GM12878 (cell line): ENCODE measurements at regions of chr10 and their contacts with region 1.

Region 1: GRCh38 chr10:77641788-77642397 is 4.3 kb upstream of the KCNMA1 start:
- DNase-seq: no peak
- ATAC-seq: peak; percentile 27
- H3K4me3 ChIP-seq: no peak overlapping the region
- H3K27ac ChIP-seq: no peak overlapping the region
- H3K4me1 ChIP-seq: 0 out of 2 replicates have a peak, but pooled peaks cover 2% of the 10 kb centered on the region
- H3K27me3 ChIP-seq: no peaks in the 10 kb centered on the region; a peak in 1 of 4 replicates
- CTCF ChIP-seq: peak; percentile 58 to 81 (median 72); a peak in 5 of 6 replicates
- EP300 ChIP-seq: no peak
- POLR2A ChIP-seq: no peak
- RAD21 ChIP-seq: peak; percentile 92

Region 2: GRCh38 chr10:77173615-77174461 is 468.1 kb before region 1 on chr10:
- CTCF ChIA-PET with region 1: interaction called, 532 read pairs
- POLR2A ChIA-PET with region 1: no interaction called
- RAD21 ChIA-PET with region 1: interaction called, 54 read pairs
- SMC1A ChIA-PET with region 1: interaction called, 113 read pairs
- in situ Hi-C with region 1: loop called (anchors 5 kb)
- intact Hi-C with region 1: loop called (anchors 1 kb)
- DNase-seq: peak; percentile 28
- ATAC-seq: peak; percentile 84
- H3K4me3 ChIP-seq: no peak overlapping the region
- H3K27ac ChIP-seq: no peak overlapping the region
- H3K4me1 ChIP-seq: no peaks in the 10 kb centered on the region
- H3K27me3 ChIP-seq: no peaks in the 10 kb centered on the region
- CTCF ChIP-seq: peak; percentile 80 to 96 (median 81); a peak in 5 of 6 replicates
- EP300 ChIP-seq: no peak
- POLR2A ChIP-seq: no peak
- RAD21 ChIP-seq: peak; percentile 96

Region 3: DNA sequence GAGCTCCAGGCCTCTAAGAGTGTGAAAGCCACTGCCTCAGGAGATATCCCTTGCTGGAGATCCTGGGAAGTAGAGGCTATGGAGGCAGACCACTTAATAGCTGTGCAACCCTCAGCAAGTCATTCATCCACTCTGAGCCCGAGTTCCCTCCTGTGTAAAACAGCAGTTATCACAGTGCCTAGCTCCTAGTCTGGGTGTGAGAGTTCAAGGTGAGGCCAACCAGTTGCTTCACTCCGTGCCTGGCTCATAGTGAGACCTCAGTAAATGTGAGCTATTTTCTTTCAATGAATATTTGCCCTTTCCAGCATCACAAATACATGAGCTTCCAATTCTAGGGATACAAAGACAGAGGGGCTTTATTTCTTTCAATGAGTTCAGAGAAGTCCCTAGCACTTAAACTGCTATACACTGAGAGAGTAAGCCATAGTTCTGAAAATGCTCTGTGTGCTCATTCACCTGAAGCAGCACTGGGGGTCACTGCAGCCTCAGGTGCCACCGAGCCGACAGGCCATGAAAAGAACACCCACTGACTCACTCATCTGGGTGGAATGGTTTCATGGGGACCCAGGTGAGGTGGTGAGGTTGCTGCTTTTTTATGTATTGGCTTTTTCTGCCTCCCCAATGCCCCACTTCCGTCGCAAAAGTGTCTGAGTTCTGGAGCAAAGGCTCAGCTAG is 264.1 kb before region 1 on chr10:
- CTCF ChIA-PET with region 1: interaction called, 23 read pairs
- POLR2A ChIA-PET with region 1: no interaction called
- RAD21 ChIA-PET with region 1: interaction called, 15 read pairs
- SMC1A ChIA-PET with region 1: interaction called, 8 read pairs
- in situ Hi-C with region 1: no loop called
- intact Hi-C with region 1: no loop called
- DNase-seq: no peak
- ATAC-seq: peak; percentile 55
- H3K4me3 ChIP-seq: no peak overlapping the region
- H3K27ac ChIP-seq: no peak overlapping the region
- H3K4me1 ChIP-seq: no peaks in the 10 kb centered on the region
- H3K27me3 ChIP-seq: no peaks in the 10 kb centered on the region
- CTCF ChIP-seq: peak in 1 of 3 experiments; percentile 29; a peak in 1 of 6 replicates
- EP300 ChIP-seq: no peak
- POLR2A ChIP-seq: no peak
- RAD21 ChIP-seq: peak; percentile 38; the same call in 1 of the 2 replicates

Region 4: DNA sequence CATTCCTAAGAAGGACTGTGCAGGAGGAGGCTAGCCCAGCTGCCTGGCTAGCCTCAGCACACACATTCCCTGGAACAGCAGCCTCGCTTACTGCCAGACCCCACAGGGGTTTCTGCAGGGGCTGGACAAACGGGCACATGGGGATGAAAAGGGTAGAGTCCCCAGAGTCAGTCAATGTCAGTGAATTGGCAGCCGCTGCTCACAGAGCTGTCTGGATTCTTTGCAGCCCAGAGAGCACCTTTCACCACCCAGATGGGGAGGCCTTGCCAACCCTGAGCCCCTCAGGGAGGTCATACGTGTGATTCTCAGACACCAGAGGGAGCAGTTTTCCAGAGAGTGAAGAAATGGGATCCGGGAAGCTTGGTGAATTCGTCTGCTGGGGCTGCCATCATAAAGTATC is 147.6 kb before region 1 on chr10:
- CTCF ChIA-PET with region 1: interaction called, 14 read pairs
- POLR2A ChIA-PET with region 1: no interaction called
- RAD21 ChIA-PET with region 1: interaction called, 33 read pairs
- SMC1A ChIA-PET with region 1: interaction called, 17 read pairs
- in situ Hi-C with region 1: no loop called
- intact Hi-C with region 1: loop called (anchors 5 kb)
- DNase-seq: no peak
- ATAC-seq: peak; percentile 13
- H3K4me3 ChIP-seq: no peak overlapping the region
- H3K27ac ChIP-seq: no peak overlapping the region
- H3K4me1 ChIP-seq: peaks cover 14% of the 10 kb centered on the region
- H3K27me3 ChIP-seq: no peaks in the 10 kb centered on the region
- CTCF ChIP-seq: 0 out of 6 replicates have a peak, but pooled peaks of 1 of the 3 experiments have one; percentile 4
- EP300 ChIP-seq: no peak
- POLR2A ChIP-seq: no peak
- RAD21 ChIP-seq: no peak

Region 5: GRCh38 chr10:77564731-77565589 is 76.9 kb before region 1 on chr10:
- CTCF ChIA-PET with region 1: interaction called, 12 read pairs
- POLR2A ChIA-PET with region 1: no interaction called
- RAD21 ChIA-PET with region 1: interaction called, 4 read pairs
- SMC1A ChIA-PET with region 1: interaction called, 6 read pairs
- in situ Hi-C with region 1: no loop called
- intact Hi-C with region 1: no loop called
- DNase-seq: no peak
- ATAC-seq: peak; percentile 13; the same call in 2 of the 3 replicates
- H3K4me3 ChIP-seq: no peak overlapping the region
- H3K27ac ChIP-seq: no peak overlapping the region
- H3K4me1 ChIP-seq: no peaks in the 10 kb centered on the region
- H3K27me3 ChIP-seq: no peaks in the 10 kb centered on the region
- CTCF ChIP-seq: no peak
- EP300 ChIP-seq: no peak
- POLR2A ChIP-seq: no peak
- RAD21 ChIP-seq: no peak

Region 6: DNA sequence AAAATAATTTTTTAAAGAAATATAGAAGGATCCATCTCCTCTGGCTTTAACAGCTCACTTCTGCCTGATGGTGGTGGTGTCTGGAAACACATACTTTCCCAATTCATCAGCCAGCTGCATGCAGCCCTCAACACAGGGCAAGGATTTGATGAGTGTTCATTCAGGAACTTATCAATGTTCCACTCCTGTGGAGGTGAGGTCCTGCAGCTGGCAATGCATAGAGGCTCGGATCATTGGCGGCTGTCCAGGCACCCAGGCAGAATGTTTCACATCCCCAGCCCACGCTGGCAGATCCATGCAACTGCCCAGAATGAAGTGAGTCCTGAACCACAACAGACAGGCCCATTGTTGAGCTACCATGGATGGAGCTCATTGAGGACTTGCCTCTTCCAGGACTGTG is 50.9 kb after region 1 on chr10:
- CTCF ChIA-PET with region 1: interaction called, 25 read pairs
- POLR2A ChIA-PET with region 1: interaction called, 4 read pairs
- RAD21 ChIA-PET with region 1: interaction called, 4 read pairs
- SMC1A ChIA-PET with region 1: interaction called, 25 read pairs
- in situ Hi-C with region 1: no loop called
- intact Hi-C with region 1: no loop called
- DNase-seq: no peak
- ATAC-seq: no peak
- H3K4me3 ChIP-seq: no peak overlapping the region
- H3K27ac ChIP-seq: no peak overlapping the region
- H3K4me1 ChIP-seq: no peaks in the 10 kb centered on the region
- H3K27me3 ChIP-seq: no peaks in the 10 kb centered on the region
- CTCF ChIP-seq: no peak
- EP300 ChIP-seq: no peak
- POLR2A ChIP-seq: no peak
- RAD21 ChIP-seq: no peak

Region 7: GRCh38 chr10:77784856-77785255 is 143.0 kb after region 1 on chr10:
- CTCF ChIA-PET with region 1: no interaction called
- POLR2A ChIA-PET with region 1: no interaction called
- RAD21 ChIA-PET with region 1: no interaction called
- SMC1A ChIA-PET with region 1: no interaction called
- in situ Hi-C with region 1: no loop called
- intact Hi-C with region 1: no loop called
- DNase-seq: no peak
- ATAC-seq: no peak
- H3K4me3 ChIP-seq: no peak overlapping the region
- H3K27ac ChIP-seq: no peak overlapping the region
- H3K4me1 ChIP-seq: no peaks in the 10 kb centered on the region
- H3K27me3 ChIP-seq: no peaks in the 10 kb centered on the region
- CTCF ChIP-seq: no peak
- EP300 ChIP-seq: no peak
- POLR2A ChIP-seq: no peak
- RAD21 ChIP-seq: no peak

Region 8: DNA sequence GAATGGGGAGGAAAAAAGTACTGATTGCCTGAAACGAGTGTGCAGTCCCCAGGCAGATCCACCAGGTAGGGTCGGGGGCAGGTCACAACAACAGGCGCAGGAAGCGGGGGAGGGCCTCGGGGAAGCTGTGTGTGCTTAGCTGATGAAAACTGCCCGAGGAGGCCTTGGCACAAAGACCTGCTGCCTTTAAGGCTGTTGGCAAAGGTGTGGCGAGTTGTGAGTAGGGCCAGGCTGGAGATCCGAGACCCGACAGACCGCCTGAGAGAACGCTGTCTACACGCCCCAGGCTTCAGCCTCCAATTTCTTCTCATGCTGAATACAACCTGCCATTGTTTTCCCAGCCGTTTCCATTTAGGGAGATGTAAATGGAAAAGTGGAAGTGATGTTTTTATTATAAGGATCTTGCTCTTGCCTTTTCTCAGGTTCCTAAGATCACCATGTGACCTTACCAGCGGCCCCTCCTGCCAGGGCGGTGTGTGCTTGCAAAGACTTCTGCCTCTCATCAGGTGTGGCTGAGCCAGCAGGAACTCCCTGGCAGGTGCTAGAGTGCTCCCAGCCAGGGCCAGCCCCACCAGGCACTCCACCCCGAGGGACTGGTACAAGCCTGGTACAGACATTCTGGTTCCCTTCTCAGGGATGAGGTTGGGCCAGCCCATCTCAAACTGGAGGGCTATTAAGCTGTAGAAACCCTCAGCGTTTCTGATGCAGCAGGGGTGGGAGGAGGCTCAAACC is 223.9 kb after region 1 on chr10:
- CTCF ChIA-PET with region 1: no interaction called
- POLR2A ChIA-PET with region 1: no interaction called
- RAD21 ChIA-PET with region 1: no interaction called
- SMC1A ChIA-PET with region 1: no interaction called
- in situ Hi-C with region 1: no loop called
- intact Hi-C with region 1: no loop called
- DNase-seq: no peak
- ATAC-seq: no peak
- H3K4me3 ChIP-seq: no peak overlapping the region
- H3K27ac ChIP-seq: no peak overlapping the region
- H3K4me1 ChIP-seq: no peaks in the 10 kb centered on the region
- H3K27me3 ChIP-seq: no peaks in the 10 kb centered on the region
- CTCF ChIP-seq: no peak
- EP300 ChIP-seq: no peak
- POLR2A ChIP-seq: no peak
- RAD21 ChIP-seq: no peak

Region 9: DNA sequence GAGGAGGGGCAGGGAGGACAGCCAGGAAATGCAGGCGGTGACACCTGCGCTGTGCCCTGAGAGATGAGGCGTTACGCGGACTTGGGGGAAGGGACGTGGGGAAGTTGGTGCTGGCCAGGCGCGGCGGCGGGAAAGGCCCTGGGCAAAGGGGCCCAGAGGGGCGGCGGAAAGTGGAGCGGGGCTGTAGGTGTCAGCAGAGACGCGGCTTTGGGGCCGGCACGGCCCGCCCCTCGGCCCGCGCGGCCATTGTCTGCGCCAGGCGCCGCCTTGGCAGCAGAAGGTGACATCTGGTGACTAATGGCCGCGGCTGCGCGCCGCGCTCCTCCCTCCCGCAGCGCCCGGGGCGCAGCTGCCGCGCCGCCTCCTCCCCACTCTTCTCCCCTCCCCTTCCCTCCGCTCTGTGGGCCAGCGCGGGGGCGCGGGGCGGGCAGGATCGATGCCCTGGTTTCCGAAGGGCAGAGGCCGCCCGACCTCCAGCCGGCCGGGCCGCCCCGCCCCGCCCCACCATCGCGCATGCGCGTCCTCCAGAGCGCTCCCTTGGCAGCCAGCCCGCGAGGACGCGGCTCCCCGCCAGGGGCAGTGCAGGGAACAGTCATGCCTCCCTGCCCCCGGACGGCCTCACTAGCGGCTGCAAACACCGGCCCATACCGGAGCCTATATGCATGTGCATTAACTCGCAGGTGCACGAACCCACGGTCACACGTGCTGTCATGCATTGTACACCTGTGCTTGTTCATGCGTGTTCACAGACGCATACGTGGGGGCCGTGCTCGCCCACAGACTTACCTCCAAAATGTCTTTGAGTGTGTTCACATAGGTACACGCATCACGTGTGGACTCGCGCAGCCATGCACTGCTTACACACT is 661.3 kb after region 1 on chr10:
- CTCF ChIA-PET with region 1: no interaction called
- POLR2A ChIA-PET with region 1: no interaction called
- RAD21 ChIA-PET with region 1: no interaction called
- SMC1A ChIA-PET with region 1: no interaction called
- in situ Hi-C with region 1: no loop called
- intact Hi-C with region 1: no loop called
- DNase-seq: peak; percentile 73
- ATAC-seq: peak; percentile 95
- H3K4me3 ChIP-seq: peak overlapping the region; percentile 64
- H3K27ac ChIP-seq: peak overlapping the region; percentile 35
- H3K4me1 ChIP-seq: peaks cover 15% of the 10 kb centered on the region
- H3K27me3 ChIP-seq: peaks cover 0 to 5% of the 10 kb centered on the region in 2 experiments; a peak in 2 of 4 replicates
- CTCF ChIP-seq: peak; percentile 72 to 79 (median 78)
- EP300 ChIP-seq: no peak; a peak in 1 of 4 replicates
- POLR2A ChIP-seq: peak; percentile 76
- RAD21 ChIP-seq: peak; percentile 32; the same call in 1 of the 2 replicates

Region 10: DNA sequence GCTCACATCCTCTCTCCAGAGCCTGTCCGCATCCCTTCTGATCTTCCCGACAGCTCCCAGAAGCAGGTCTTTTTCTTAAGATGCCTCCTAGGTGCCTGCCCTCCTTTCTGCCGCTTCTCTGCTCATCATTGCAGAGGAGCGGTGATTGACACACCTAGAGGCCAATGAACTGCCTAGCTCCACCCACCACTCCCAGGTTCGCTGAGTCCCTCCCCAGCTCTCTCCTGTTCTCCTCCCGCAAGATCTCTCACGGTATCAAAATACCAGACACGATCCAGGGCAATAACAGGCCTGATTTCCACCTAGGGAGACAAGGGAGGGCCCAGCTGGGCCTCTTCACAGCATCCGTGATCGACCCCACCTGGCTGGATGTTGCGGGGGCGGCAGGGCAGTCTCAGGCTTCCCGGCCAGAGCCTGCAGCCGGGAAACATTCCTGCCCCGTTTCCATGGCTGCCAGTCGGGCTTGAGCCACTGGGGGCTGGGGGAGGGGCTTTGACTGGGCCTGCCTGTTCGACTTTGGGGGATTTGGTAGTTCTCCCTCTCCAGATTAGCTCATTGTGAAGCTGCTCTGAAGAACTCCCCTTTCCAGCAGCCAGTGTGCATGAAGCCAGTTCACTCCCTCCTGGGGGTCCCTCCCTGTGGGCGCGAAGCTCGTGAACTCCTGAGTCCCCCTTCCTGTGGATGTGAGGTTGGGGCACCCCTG is 765.3 kb after region 1 on chr10:
- CTCF ChIA-PET with region 1: no interaction called
- POLR2A ChIA-PET with region 1: no interaction called
- RAD21 ChIA-PET with region 1: no interaction called
- SMC1A ChIA-PET with region 1: no interaction called
- in situ Hi-C with region 1: no loop called
- intact Hi-C with region 1: no loop called
- DNase-seq: peak; percentile 1
- ATAC-seq: peak; percentile 47; the same call in 2 of the 3 replicates
- H3K4me3 ChIP-seq: no peak overlapping the region
- H3K27ac ChIP-seq: no peak overlapping the region
- H3K4me1 ChIP-seq: no peaks in the 10 kb centered on the region
- H3K27me3 ChIP-seq: peaks cover 0 to 2% of the 10 kb centered on the region in 2 experiments; a peak in 3 of 4 replicates
- CTCF ChIP-seq: no peak
- EP300 ChIP-seq: no peak
- POLR2A ChIP-seq: no peak
- RAD21 ChIP-seq: no peak